ENCODE measurements at regions of chr2 and their contacts with region 1.

Region 1: GRCh38 chr2:74482801-74483674 is at the starts of genes CCDC142 and TTC31:
- DNase-seq: peak; percentile 86
- H3K4me3 ChIP-seq: peak within 1 kb of the TSS; percentile 68 to 96 (median 84)
- H3K27ac ChIP-seq: peak within 1 kb of the TSS; percentile 88 to 97 (median 90)
- H3K4me1 ChIP-seq: peaks cover 21 to 48% (median 24%) of the 10 kb centered on the region in 3 donors
- H3K27me3 ChIP-seq: no peaks in the 10 kb centered on the region
- CTCF ChIP-seq: peak; percentile 83 to 92 (median 87)
- POLR2A ChIP-seq: peak in 1 of 4 donors; percentile 45
- total RNA-seq, gene CCDC142: 6.5 to 24.6 (median 14.5) TPM
- total RNA-seq, gene TTC31: 11.2 to 27.7 (median 17.5) TPM

Region 2: DNA sequence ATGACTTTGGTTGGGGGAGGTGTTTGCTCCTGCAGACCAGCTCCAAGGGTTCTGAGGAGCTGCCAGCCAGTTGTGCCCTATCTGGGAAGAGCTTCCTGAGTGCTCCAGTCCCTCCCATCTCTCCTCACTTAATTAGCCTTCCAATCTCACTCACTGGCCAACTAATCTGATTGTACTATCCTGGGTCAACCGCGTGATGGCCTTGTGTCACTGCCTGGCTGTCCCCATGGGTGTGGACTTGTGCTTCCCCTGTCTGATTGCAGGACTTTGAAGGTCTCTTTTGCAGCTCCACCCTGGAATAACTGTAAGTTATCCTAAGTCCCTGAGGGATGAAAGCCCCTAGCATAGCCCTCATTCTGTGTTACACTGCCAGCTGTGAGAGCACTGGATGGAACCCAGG is 204.9 kb before region 1 on chr2:
- intact Hi-C with region 1: no loop called
- DNase-seq: no peak
- H3K4me3 ChIP-seq: no peak overlapping the region
- H3K27ac ChIP-seq: no peak overlapping the region
- H3K4me1 ChIP-seq: no peaks in the 10 kb centered on the region
- H3K27me3 ChIP-seq: no peaks in the 10 kb centered on the region
- CTCF ChIP-seq: no peak
- POLR2A ChIP-seq: no peak

Region 3: DNA sequence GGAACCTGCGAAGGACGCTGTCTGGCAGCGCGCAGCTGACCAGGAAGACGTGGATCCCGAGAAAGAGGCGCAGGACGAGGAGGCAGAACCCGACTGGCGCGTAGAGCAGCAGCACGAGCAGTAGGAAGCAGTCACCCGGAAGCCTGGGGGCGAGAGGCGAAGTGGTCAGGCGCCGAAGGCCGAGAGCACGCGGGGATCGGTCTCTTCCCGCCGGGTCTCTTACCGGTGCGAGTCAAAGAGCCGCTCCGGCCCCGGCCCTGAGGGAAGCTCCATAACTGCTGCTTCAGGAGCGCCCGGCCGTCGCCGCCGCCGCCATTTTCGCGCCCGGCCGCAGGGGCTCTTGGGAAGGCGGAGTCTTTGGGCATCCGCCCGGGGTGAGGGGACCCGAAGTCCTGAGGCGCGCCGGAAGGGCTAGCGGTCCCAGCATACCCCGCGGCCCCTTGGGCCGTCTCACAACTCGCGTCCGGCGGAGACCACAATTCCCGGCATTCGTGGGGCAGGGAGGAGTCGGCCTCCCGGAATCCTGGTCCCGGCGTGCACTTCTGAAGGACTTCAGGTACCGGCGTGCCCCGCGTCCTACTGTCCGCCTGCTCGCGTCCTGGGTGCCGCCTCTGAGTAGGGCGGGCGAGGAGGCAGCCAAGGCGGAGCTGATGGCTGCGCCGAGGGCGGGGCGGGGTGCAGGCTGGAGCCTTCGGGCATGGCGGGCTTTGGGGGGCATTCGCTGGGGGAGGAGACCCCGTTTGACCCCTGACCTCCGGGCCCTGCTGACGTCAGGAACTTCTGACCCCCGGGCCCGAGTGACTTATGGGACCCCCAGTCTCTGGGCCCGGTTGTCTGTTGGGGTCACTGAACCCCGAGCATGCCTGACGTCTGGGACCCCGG is 46.6 kb after region 1 on chr2 and contains the starts of genes AUP1 and HTRA2:
- intact Hi-C with region 1: loop called (anchors 5 kb)
- DNase-seq: peak; percentile 92
- H3K4me3 ChIP-seq: peak within 1 kb of the TSS; percentile 83 to 98 (median 90)
- H3K27ac ChIP-seq: peak within 1 kb of the TSS; percentile 90 to 95 (median 91)
- H3K4me1 ChIP-seq: peaks cover 18 to 58% (median 28%) of the 10 kb centered on the region in 3 donors
- H3K27me3 ChIP-seq: no peaks in the 10 kb centered on the region
- CTCF ChIP-seq: peak in 2 of 6 experiments; percentile 8 to 57
- POLR2A ChIP-seq: peak in 3 of 4 donors; percentile 68 to 86 (median 76)
- total RNA-seq, gene AUP1: 79.9 to 142 (median 105) TPM
- total RNA-seq, gene HTRA2: 16.9 to 25.8 (median 22.0) TPM

Region 4: GRCh38 chr2:74587664-74588277 is 104.7 kb after region 1 on chr2:
- intact Hi-C with region 1: loop called (anchors 10 kb)
- DNase-seq: no peak
- H3K4me3 ChIP-seq: no peak overlapping the region
- H3K27ac ChIP-seq: no peak overlapping the region
- H3K4me1 ChIP-seq: no peaks in the 10 kb centered on the region
- H3K27me3 ChIP-seq: peaks cover 0 to 45% (median 0%) of the 10 kb centered on the region in 4 donors
- CTCF ChIP-seq: peak; percentile 44 to 72 (median 54)
- POLR2A ChIP-seq: no peak

Measured in esophagus squamous epithelium (tissue), 5 donors.